Activated naive CD4-positive, alpha-beta T cell treated with anti-CD3 and anti-CD28 coated beads for 36 hours (primary cell): ENCODE measurements at regions of chr12 and their contacts with region 1.

Region 1: GRCh38 chr12:111451649-111452129 is 46.0 kb downstream of the SH2B3 start:
- DNase-seq: no peak
- H3K4me3 Mint-ChIP-seq: no peak overlapping the region
- H3K27ac Mint-ChIP-seq: peak overlapping the region; percentile 19
- H3K4me1 Mint-ChIP-seq: peaks cover 23% of the 10 kb centered on the region
- H3K27me3 Mint-ChIP-seq: no peaks in the 10 kb centered on the region

Region 2: DNA sequence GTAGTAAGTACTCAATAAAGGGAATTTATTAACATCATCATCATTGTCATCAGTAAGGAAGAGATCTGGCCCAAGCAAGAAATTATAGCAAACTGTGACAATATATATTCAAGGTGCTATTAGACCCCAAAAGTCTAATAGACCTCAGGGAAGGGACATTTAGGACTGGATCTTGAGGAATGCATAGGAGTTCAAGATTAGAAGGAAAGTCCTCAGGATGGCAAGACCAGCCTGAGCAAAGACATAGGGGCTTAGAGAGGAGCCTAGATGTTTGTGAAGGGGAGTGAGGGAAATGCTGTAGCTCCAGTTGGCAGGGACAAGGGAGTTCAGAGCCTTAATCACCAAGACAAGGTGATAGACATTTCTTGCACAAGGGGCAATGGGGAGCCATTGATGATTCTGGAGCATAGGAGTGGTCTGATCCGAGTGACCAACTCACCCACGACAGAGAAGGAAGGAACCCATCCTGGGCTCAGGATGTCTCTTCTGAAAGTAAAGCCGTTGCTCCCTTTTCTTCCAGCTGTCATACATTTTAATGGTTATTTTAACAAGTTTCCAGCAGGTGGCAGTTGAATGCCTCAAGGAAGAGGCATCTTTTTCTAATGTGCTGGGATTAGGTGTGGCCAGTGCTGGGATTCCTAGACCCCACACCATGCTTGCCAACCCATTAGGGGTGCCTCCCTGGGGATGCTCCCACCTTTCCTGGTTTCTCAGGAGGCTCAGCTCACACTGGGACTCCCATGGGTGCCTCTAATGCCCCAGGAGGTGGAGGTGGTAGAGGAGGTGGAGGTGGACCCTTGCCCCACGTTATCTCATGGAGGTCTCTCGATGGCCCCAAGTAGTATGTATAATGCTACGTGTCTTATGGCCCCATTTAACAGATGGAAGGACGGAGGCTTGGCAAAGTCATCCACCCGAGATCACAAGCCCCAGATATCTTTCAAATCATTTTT is 120.6 kb before region 1 on chr12:
- CTCF ChIA-PET with region 1: interaction called, 18 read pairs
- intact Hi-C with region 1: loop called (anchors 1 kb)
- DNase-seq: no peak
- H3K4me3 Mint-ChIP-seq: no peak overlapping the region
- H3K27ac Mint-ChIP-seq: no peak overlapping the region
- H3K4me1 Mint-ChIP-seq: peaks cover 3% of the 10 kb centered on the region
- H3K27me3 Mint-ChIP-seq: no peaks in the 10 kb centered on the region

Region 3: DNA sequence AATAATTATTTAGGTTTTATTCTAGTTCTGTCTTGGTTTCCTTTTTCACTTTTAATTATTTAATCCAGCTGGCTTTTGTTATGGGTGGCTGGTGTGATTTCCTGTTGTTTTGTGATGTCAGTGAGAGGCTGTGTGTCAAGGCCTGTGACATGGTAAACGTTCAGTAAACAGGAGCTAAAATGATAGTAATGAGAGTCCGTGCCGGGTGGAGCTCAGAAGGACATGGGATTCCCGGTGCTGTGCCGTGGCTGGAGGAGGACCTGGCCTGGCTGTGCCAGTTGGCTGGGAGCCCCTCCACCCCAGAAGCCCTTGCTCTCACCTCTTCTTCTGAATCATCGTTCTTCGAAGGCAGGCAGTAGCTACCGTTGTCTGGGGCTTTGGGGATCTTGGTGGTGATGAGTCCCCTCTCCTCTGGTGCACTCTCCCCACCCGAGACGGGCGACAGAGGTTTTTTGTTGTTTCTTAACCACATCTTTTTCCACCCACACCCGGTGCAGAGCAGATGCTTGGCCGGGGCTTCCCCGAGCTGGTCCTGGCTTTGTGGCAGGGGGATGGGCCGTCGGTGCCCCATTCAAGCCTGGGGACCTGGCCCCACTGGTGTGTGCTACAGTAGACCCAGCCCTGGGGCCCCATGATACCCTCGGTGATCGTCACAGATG is 16.9 kb before region 1 on chr12:
- CTCF ChIA-PET with region 1: interaction called, 25 read pairs
- intact Hi-C with region 1: no loop called
- DNase-seq: peak; percentile 89
- H3K4me3 Mint-ChIP-seq: peak overlapping the region; percentile 56
- H3K27ac Mint-ChIP-seq: peak overlapping the region; percentile 92
- H3K4me1 Mint-ChIP-seq: peaks cover 91% of the 10 kb centered on the region
- H3K27me3 Mint-ChIP-seq: no peaks in the 10 kb centered on the region

Region 4: DNA sequence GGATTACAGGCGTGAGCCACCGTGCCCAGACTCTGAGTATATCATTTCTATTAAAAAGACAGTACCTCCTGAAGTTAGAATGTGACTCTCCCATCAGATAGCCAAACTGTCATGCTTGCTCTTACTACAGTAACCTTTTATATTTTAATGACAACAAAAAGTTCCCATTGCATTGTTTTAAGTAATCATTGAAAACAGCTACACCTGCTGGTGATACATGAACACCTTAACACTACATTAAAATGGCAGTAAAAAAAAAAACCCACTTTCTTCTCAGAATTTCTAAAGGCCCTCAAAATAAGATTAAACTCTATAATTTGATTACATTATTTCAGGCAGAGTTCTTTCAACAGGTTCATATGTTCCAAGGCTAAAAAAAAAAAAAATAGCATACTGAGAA is 30.8 kb after region 1 on chr12:
- CTCF ChIA-PET with region 1: interaction called, 12 read pairs
- intact Hi-C with region 1: no loop called
- DNase-seq: no peak
- H3K4me3 Mint-ChIP-seq: no peak overlapping the region
- H3K27ac Mint-ChIP-seq: no peak overlapping the region
- H3K4me1 Mint-ChIP-seq: no peaks in the 10 kb centered on the region
- H3K27me3 Mint-ChIP-seq: no peaks in the 10 kb centered on the region

Region 5: GRCh38 chr12:111812881-111813741 is 361.4 kb after region 1 on chr12:
- CTCF ChIA-PET with region 1: no interaction called
- intact Hi-C with region 1: loop called (anchors 1 kb)
- DNase-seq: peak; percentile 82
- H3K4me3 Mint-ChIP-seq: no peak overlapping the region
- H3K27ac Mint-ChIP-seq: no peak overlapping the region
- H3K4me1 Mint-ChIP-seq: peaks cover 6% of the 10 kb centered on the region
- H3K27me3 Mint-ChIP-seq: no peaks in the 10 kb centered on the region